ENCODE measurements at regions of chr3 and their contacts with region 1.

Region 1: DNA sequence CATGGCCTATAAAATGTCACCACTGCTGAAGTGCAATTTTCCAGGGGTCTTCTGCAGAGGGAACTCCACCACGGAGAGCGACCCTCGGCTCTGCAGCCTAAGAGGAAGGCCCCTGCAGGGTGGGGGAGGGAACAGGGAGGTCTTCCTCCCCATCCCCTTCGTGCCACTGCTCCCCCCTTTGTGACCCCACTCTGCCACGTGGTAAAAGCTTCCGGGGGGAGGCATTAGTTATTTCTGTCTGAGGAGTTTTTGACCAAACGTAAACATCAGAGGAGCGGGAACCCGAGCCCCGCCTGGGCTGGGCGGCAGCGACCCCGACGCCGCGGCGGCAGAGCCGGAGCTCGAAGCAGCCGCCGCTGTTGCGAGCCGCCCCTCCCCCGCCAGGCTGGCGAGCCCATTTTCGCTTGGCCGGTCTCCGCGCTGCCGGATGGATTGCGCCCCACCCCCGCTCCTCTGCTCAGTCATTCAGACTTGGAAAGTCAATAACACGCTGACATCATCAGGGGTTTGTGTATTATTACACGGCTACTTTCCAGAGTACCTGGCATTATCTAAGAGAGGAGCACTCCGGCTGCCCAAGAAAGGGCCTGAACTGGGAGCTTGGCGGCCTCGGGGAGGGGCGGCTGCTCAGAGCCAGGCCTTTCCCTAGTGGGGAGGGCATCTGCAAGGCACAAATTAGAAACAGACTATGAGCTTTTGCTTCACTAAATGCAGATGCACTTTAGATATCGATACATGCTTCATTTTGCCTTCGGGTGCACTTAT is 162.5 kb upstream of the TBL1XR1 start:
- DNase-seq: peak; percentile 96
- ATAC-seq: peak; percentile 79
- H3K4me3 ChIP-seq: peak overlapping the region; percentile 57 to 87 (median 70)
- H3K4me3 Mint-ChIP-seq: peak overlapping the region; percentile 91
- H3K27ac ChIP-seq: peak overlapping the region; percentile 90
- H3K27ac Mint-ChIP-seq: peak overlapping the region; percentile 98
- H3K4me1 ChIP-seq: peaks cover 41 to 53% of the 10 kb centered on the region in 2 donors
- H3K4me1 Mint-ChIP-seq: peaks cover 62% of the 10 kb centered on the region
- H3K27me3 ChIP-seq: no peaks in the 10 kb centered on the region
- H3K27me3 Mint-ChIP-seq: no peaks in the 10 kb centered on the region
- CTCF ChIP-seq: no peak

Region 2: GRCh38 chr3:176755552-176755951 is 604.2 kb before region 1 on chr3:
- CTCF ChIA-PET with region 1: no interaction called
- POLR2A ChIA-PET with region 1: no interaction called
- intact Hi-C with region 1: no loop called
- DNase-seq: no peak
- ATAC-seq: no peak
- H3K4me3 ChIP-seq: no peak overlapping the region
- H3K4me3 Mint-ChIP-seq: no peak overlapping the region
- H3K27ac ChIP-seq: no peak overlapping the region
- H3K27ac Mint-ChIP-seq: no peak overlapping the region
- H3K4me1 ChIP-seq: no peaks in the 10 kb centered on the region
- H3K4me1 Mint-ChIP-seq: no peaks in the 10 kb centered on the region
- H3K27me3 ChIP-seq: no peaks in the 10 kb centered on the region
- H3K27me3 Mint-ChIP-seq: peaks cover 4% of the 10 kb centered on the region
- CTCF ChIP-seq: no peak

Region 3: DNA sequence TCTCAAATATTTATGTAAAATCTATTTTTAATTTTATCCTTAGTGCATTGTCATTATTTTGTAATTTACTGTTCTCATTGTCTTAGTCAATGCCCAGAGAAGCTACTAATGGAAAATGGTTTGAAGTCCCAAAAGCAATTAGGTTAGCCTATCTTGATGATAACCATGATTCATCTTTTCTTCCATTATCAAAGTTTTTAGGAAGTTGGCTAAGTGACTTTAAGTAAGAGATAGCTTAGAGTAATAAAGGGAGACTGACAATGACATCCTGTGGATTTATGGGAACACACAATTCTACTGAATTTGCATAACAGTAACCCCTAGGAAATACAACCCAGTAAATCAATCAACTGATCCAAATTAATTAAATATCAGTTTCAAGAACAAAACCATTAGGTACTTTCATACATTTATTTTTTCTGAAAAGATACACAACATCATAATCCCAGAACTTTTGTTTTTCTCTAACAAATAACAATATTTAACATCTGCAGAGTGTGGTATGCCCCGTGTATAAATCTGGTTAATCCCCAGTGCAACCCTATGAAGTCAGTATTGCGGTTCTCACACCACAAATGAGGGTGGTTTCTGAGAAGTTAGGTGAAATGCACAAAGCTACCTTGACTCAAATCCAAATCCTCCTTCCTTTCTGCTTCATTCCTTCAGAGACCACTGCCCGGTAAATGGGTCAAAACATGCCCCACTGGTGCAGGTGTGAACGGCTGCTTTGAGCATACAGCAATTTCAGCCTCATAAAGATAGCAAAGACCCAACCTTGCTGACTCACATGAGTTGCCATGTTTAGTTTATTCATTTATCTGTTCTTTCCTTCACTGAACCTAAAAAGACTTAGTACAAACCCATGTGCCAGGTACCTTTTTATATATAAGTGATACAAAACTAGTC is 364.6 kb before region 1 on chr3:
- CTCF ChIA-PET with region 1: no interaction called
- POLR2A ChIA-PET with region 1: no interaction called
- intact Hi-C with region 1: no loop called
- DNase-seq: no peak
- ATAC-seq: no peak
- H3K4me3 ChIP-seq: no peak overlapping the region
- H3K4me3 Mint-ChIP-seq: no peak overlapping the region
- H3K27ac ChIP-seq: no peak overlapping the region
- H3K27ac Mint-ChIP-seq: no peak overlapping the region
- H3K4me1 ChIP-seq: no peaks in the 10 kb centered on the region
- H3K4me1 Mint-ChIP-seq: no peaks in the 10 kb centered on the region
- H3K27me3 ChIP-seq: no peaks in the 10 kb centered on the region
- H3K27me3 Mint-ChIP-seq: peaks cover 4% of the 10 kb centered on the region
- CTCF ChIP-seq: no peak

Region 4: DNA sequence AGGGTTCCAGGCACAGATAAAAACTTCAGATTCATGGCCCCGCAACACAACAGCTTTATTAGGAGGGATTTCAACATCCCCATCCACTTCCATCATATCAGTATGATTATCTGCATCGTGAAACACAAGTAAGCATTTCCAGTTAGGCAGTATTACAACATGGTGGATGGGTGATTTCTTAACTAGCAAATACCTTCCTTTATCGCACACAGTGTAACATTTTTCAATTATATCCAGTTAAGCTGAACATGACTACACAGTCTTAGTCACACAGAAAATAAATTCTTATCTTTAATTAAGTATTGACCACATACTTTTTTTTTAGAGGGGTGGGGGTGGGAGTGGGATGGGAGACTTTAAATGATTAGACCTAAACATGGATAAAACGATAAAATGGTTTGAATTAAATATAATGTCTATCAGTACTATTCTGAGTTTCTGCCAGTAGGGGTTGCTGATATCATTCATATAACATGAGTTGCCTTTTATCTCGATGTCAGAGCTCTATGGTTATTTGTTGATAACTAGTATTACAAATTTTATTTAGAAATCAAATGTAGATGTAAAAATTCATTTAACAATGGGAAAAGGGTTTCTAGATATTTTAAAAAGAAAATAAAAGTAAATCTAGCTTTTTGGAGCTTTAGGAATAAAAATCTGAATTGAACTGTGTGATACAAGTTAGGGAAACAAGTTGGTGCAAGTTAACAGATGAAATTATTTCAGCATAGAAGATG is 309.1 kb before region 1 on chr3:
- CTCF ChIA-PET with region 1: interaction called, 50 read pairs
- POLR2A ChIA-PET with region 1: interaction called, 8 read pairs
- intact Hi-C with region 1: loop called (anchors 1 kb)
- DNase-seq: peak; percentile 69
- ATAC-seq: peak; percentile 72
- H3K4me3 ChIP-seq: no peak overlapping the region
- H3K4me3 Mint-ChIP-seq: no peak overlapping the region
- H3K27ac ChIP-seq: no peak overlapping the region
- H3K27ac Mint-ChIP-seq: no peak overlapping the region
- H3K4me1 ChIP-seq: no peaks in the 10 kb centered on the region
- H3K4me1 Mint-ChIP-seq: peaks cover 11% of the 10 kb centered on the region
- H3K27me3 ChIP-seq: no peaks in the 10 kb centered on the region
- H3K27me3 Mint-ChIP-seq: no peaks in the 10 kb centered on the region
- CTCF ChIP-seq: peak; percentile 85

Region 5: GRCh38 chr3:177197041-177197727 is 162.6 kb before region 1 on chr3 and contains the start of gene TBL1XR1:
- CTCF ChIA-PET with region 1: interaction called, 73 read pairs
- POLR2A ChIA-PET with region 1: interaction called, 48 read pairs
- intact Hi-C with region 1: loop called (anchors 1 kb)
- DNase-seq: peak; percentile 93
- ATAC-seq: peak; percentile 60
- H3K4me3 ChIP-seq: peak within 1 kb of the TSS; percentile 94 to 99 (median 98)
- H3K4me3 Mint-ChIP-seq: peak within 1 kb of the TSS; percentile 99
- H3K27ac ChIP-seq: peak within 1 kb of the TSS; percentile 89 to 90
- H3K27ac Mint-ChIP-seq: peak within 1 kb of the TSS; percentile 97
- H3K4me1 ChIP-seq: peaks cover 46 to 53% of the 10 kb centered on the region in 2 donors
- H3K4me1 Mint-ChIP-seq: peaks cover 64% of the 10 kb centered on the region
- H3K27me3 ChIP-seq: no peaks in the 10 kb centered on the region
- H3K27me3 Mint-ChIP-seq: no peaks in the 10 kb centered on the region
- CTCF ChIP-seq: no peak
- total RNA-seq, gene TBL1XR1: 128 and 138 TPM in 2 replicates

Region 6: GRCh38 chr3:177300039-177300833 is 59.5 kb before region 1 on chr3:
- CTCF ChIA-PET with region 1: no interaction called
- POLR2A ChIA-PET with region 1: no interaction called
- intact Hi-C with region 1: loop called (anchors 10 kb)
- DNase-seq: peak; percentile 36
- ATAC-seq: peak; percentile 47
- H3K4me3 ChIP-seq: no peak overlapping the region
- H3K4me3 Mint-ChIP-seq: peak overlapping the region; percentile 16
- H3K27ac ChIP-seq: no peak overlapping the region
- H3K27ac Mint-ChIP-seq: peak overlapping the region; percentile 11
- H3K4me1 ChIP-seq: peaks cover 10 to 11% of the 10 kb centered on the region in 2 donors
- H3K4me1 Mint-ChIP-seq: peaks cover 14% of the 10 kb centered on the region
- H3K27me3 ChIP-seq: no peaks in the 10 kb centered on the region
- H3K27me3 Mint-ChIP-seq: no peaks in the 10 kb centered on the region
- CTCF ChIP-seq: no peak

Region 7: DNA sequence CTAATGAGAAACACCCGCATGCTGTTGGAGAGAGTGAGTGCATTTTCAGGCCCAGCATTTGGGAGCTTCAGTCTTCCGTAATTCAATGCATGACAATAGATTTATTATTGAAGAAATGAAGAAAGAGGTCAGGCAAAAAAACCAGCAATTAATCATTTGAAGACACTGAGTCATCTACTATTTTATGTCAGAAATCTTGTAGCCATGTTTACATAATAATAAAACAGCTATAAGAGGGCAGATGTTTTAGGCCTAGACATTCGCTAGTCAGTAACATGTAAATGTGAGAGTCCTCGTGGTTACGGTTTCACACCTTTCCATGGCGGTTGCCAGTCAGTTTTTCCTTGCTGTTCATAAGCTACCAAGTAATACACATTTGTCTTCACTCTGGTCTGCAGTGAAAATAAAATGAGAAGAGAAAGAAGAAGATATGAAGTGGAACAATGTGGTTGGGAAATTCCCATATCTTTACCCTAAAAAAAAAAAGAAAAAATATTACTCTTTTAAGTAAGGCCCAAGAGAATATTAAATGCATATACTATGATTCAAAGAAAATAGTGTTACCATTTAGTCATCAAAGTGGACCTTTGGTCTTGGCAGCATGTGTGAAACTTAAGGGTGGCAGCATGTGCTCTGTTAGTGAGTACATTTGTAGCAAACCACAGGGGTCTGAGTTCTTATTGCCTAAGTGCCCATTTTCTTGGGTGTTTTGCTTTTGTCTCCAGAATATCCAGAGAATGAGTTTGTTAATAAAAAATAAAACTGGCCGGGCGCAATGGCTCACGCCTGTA is 22.0 kb before region 1 on chr3:
- CTCF ChIA-PET with region 1: interaction called, 9 read pairs
- POLR2A ChIA-PET with region 1: interaction called, 5 read pairs
- intact Hi-C with region 1: loop called (anchors 1 kb)
- DNase-seq: peak; percentile 83
- ATAC-seq: peak; percentile 83
- H3K4me3 ChIP-seq: no peak overlapping the region
- H3K4me3 Mint-ChIP-seq: peak overlapping the region; percentile 51
- H3K27ac ChIP-seq: peak overlapping the region; percentile 38 to 77
- H3K27ac Mint-ChIP-seq: peak overlapping the region; percentile 67
- H3K4me1 ChIP-seq: peaks cover 37 to 42% of the 10 kb centered on the region in 2 donors
- H3K4me1 Mint-ChIP-seq: peaks cover 51% of the 10 kb centered on the region
- H3K27me3 ChIP-seq: no peaks in the 10 kb centered on the region
- H3K27me3 Mint-ChIP-seq: no peaks in the 10 kb centered on the region
- CTCF ChIP-seq: no peak

Region 8: DNA sequence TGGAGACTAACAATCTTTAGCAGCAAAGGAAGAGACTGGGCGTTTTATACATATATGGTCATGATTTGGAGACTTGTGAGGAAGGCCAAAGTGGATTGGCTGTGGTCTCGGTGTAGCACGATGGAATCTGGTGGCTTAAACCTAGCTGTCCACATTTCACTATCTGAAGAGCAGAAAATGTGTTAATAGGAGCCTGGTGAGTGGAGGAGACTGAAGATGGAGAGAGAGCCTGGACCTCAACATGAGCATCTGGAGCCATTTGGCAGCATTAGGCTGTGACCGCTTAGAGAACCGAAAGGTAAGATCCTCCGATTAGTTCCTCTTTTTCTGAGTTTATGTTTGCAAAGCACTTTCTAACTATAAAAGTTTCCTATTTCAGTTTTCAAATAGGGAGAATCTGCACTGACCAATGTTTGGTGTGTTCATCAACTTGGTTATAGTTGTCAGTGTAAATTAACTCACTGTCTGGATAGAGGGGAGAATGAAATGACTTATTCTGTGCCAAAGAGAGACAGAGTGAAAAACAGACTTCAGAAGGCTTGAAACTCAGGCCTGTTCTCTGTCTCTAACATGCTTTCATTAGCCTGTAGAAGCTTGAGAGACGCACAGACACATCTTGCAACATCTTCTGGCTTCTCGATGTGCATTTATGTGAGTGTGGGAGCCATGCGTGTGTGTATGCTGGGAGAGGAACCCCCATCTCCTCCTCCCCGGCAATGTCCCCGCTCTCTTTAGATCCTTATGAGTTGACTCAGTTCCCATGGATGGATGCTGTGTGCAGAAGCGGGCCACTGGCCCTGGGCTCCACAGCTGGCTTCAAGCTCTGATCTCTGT is 82.3 kb after region 1 on chr3:
- CTCF ChIA-PET with region 1: no interaction called
- POLR2A ChIA-PET with region 1: no interaction called
- intact Hi-C with region 1: loop called (anchors 2 kb)
- DNase-seq: peak; percentile 75
- ATAC-seq: peak; percentile 95
- H3K4me3 ChIP-seq: no peak overlapping the region
- H3K4me3 Mint-ChIP-seq: peak overlapping the region; percentile 2
- H3K27ac ChIP-seq: peak overlapping the region; percentile 5 to 56
- H3K27ac Mint-ChIP-seq: peak overlapping the region; percentile 75
- H3K4me1 ChIP-seq: peaks cover 13% of the 10 kb centered on the region in 2 donors
- H3K4me1 Mint-ChIP-seq: peaks cover 19% of the 10 kb centered on the region
- H3K27me3 ChIP-seq: no peaks in the 10 kb centered on the region
- H3K27me3 Mint-ChIP-seq: no peaks in the 10 kb centered on the region
- CTCF ChIP-seq: no peak

Measured in B cell (primary cell).